Right ventricle myocardium superior (tissue), 1 donor: ENCODE measurements at regions of chr3 and their contacts with region 1.

Region 1: DNA sequence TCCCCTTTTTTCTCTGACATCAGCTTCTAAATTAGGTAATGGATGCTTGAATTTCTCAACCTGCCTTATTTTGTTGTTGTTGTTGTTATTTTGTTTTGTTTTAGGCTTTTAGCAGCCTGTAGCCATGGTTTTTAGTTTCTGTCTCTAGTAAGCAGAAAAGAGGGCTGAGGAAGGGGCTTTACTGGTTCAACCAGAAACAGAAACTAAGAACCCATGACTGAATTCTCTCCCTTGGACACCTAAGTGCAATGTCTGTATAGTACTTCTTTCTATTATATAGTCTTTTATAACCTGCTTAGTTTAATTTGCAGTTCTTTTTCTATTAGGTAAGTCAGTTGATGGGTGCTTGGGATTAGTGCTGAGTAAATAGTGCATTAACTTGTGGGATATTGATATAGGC is 129.0 kb downstream of the BBX start:
- DNase-seq: no peak
- ATAC-seq: no peak

Region 2: GRCh38 chr3:107574650-107575049 is 77.1 kb before region 1 on chr3:
- intact Hi-C with region 1: loop called (anchors 10 kb)
- DNase-seq: no peak
- ATAC-seq: peak; percentile 69